Activated T-helper 2 cell treated with anti-CD3 and anti-CD28 coated beads, Interferon-gamma antibody, Interleukin-2, Interleukin-4, amounts not matched to agents 10 μg/mL and 5 μg/mL and 100 μg/mL, durations not matched to agents 14 hours and 24 hours and 36 hours (primary cell): ENCODE measurements at regions of chr17 and their contacts with region 1.

Region 1: GRCh38 chr17:34637548-34638525 is 58.5 kb downstream of the TMEM132E start:
- DNase-seq: peak; percentile 63
- H3K4me3 Mint-ChIP-seq: no peak overlapping the region
- H3K27ac Mint-ChIP-seq: no peak overlapping the region
- H3K4me1 Mint-ChIP-seq: no peaks in the 10 kb centered on the region
- H3K27me3 Mint-ChIP-seq: peaks cover 34% of the 10 kb centered on the region

Region 2: GRCh38 chr17:34420254-34420766 is 217.5 kb before region 1 on chr17:
- intact Hi-C with region 1: loop called (anchors 1 kb)
- DNase-seq: peak; percentile 38
- H3K4me3 Mint-ChIP-seq: no peak overlapping the region
- H3K27ac Mint-ChIP-seq: no peak overlapping the region
- H3K4me1 Mint-ChIP-seq: peaks cover 4% of the 10 kb centered on the region
- H3K27me3 Mint-ChIP-seq: peaks cover 45% of the 10 kb centered on the region

Region 3: GRCh38 chr17:34542700-34543336 is 95.0 kb before region 1 on chr17:
- intact Hi-C with region 1: loop called (anchors 1 kb)
- DNase-seq: peak; percentile 19
- H3K4me3 Mint-ChIP-seq: no peak overlapping the region
- H3K27ac Mint-ChIP-seq: no peak overlapping the region
- H3K4me1 Mint-ChIP-seq: no peaks in the 10 kb centered on the region
- H3K27me3 Mint-ChIP-seq: peaks cover 36% of the 10 kb centered on the region

Region 4: DNA sequence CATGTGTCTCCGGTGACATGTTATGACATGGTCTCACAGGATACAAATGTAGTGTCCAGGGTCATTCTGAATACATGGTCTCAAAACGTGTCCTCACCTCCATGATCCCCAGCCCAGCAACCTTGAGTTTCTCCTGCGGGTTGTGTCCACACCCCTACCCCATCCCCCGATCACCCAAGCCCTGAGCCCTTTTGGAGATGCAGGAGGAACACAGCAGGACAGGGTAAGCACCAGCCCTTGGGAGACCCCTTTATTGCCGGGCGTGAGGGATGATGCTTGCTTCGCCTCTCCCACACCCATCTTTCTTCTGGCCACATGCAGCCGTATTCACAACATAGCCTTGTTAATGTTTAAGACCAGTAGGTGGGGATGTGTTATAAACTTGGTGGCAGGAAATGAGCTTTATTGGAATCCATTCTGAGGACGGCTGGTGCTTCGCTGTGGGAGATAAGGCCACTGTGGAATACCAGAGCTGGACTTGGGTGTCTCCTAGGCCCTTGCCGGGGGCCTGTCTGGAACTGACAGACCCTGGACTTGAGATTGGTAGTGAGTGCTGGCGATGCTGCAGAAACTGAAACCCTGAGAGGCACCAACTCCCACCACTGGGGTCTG is 52.9 kb before region 1 on chr17:
- intact Hi-C with region 1: loop called (anchors 5 kb)
- DNase-seq: no peak
- H3K4me3 Mint-ChIP-seq: no peak overlapping the region
- H3K27ac Mint-ChIP-seq: no peak overlapping the region
- H3K4me1 Mint-ChIP-seq: no peaks in the 10 kb centered on the region
- H3K27me3 Mint-ChIP-seq: peaks cover 70% of the 10 kb centered on the region

Region 5: DNA sequence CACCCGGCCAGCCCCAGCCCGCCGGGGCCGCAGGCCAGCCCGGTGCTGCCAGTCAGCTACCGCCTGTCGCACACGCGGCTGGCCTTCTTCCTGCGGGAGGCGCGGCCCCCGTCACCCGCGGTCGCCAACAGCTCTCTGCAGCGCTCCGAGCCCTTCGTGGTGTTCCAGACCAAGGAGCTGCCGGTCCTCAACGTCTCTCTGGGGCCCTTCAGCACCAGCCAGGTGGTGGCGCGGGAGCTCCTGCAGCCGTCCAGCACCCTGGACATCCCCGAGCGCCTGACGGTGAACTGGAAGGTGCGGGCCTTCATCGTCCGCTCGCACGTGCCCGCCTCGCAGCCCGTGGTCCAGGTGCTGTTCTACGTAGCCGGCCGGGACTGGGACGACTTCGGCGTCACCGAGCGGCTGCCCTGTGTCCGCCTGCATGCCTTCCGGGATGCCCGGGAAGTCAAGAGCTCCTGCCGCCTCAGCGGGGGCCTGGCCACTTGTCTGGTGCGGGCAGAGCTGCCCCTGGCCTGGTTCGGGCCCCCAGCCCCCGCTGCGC is 11.6 kb before region 1 on chr17:
- intact Hi-C with region 1: no loop called
- DNase-seq: no peak
- H3K4me3 Mint-ChIP-seq: no peak overlapping the region
- H3K27ac Mint-ChIP-seq: no peak overlapping the region
- H3K4me1 Mint-ChIP-seq: no peaks in the 10 kb centered on the region
- H3K27me3 Mint-ChIP-seq: peaks cover 40% of the 10 kb centered on the region